ENCODE measurements at regions of chr22 and their contacts with region 1.

Region 1: DNA sequence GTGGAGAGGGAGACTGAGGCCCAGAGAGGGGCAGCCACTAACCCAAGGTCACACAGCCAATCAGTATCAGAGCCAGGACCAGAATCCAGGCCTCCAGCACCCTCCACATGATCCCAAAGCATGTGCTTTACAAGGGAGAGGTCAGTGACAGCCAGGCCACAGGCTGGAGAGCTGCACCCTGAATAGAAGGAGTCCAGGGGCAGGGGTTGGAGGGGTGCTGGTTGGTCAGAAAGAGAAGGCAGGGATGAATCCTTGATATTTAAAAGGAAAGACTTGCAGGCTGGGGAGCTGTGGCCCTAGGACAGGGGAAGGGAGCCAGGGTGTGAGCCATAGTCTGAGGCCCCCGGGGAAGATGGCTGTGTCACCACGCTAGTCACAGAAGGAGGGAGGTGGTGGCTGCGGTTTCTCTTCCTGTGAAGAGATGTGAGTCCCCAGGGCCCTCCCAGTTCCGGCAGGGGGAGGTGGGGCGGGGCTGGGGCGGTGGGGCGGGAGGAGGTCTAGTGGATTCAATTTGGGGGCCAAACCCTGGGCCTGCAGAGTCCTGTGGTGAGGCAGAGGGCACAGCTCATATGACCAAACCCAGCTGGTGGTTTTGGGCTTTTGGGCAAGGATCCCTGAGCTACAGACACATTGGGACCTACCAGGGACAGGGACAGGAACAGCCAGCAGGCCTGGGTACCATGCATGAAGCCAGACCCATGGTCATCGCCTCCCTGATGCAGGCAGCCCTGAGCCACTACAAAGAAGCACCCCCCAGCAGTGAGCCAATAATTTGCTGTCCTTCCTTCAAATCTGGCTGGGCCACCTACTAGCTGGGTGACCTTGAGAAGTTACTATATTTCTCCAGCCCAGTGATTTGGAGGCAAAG is 14.0 kb downstream of the RAC2 start:
- DNase-seq: peak; percentile 87 to 96 (median 90)
- H3K4me3 ChIP-seq: peak overlapping the region; percentile 85
- H3K4me3 Mint-ChIP-seq: peak overlapping the region; percentile 76 to 89 (median 85)
- H3K27ac ChIP-seq: peak overlapping the region; percentile 93
- H3K27ac Mint-ChIP-seq: peak overlapping the region; percentile 98 to 100 (median 99)
- H3K4me1 ChIP-seq: peaks cover 94% of the 10 kb centered on the region
- H3K4me1 Mint-ChIP-seq: peaks cover 86 to 92% (median 92%) of the 10 kb centered on the region in 3 donors
- H3K27me3 ChIP-seq: no peaks in the 10 kb centered on the region
- H3K27me3 Mint-ChIP-seq: no peaks in the 10 kb centered on the region

Region 2: GRCh38 chr22:37218771-37219411 is 11.1 kb before region 1 on chr22:
- CTCF ChIA-PET with region 1: interaction called, 12 read pairs
- POLR2A ChIA-PET with region 1: interaction called, 14 read pairs
- DNase-seq: peak; percentile 36 to 94 (median 86)
- H3K4me3 ChIP-seq: peak overlapping the region; percentile 53
- H3K4me3 Mint-ChIP-seq: peak overlapping the region; percentile 6 to 68 (median 61)
- H3K27ac ChIP-seq: no peak overlapping the region
- H3K27ac Mint-ChIP-seq: peak overlapping the region; percentile 46 to 99 (median 94)
- H3K4me1 ChIP-seq: peaks cover 76% of the 10 kb centered on the region
- H3K4me1 Mint-ChIP-seq: peaks cover 63 to 83% (median 76%) of the 10 kb centered on the region in 3 donors
- H3K27me3 ChIP-seq: no peaks in the 10 kb centered on the region
- H3K27me3 Mint-ChIP-seq: no peaks in the 10 kb centered on the region

Region 3: DNA sequence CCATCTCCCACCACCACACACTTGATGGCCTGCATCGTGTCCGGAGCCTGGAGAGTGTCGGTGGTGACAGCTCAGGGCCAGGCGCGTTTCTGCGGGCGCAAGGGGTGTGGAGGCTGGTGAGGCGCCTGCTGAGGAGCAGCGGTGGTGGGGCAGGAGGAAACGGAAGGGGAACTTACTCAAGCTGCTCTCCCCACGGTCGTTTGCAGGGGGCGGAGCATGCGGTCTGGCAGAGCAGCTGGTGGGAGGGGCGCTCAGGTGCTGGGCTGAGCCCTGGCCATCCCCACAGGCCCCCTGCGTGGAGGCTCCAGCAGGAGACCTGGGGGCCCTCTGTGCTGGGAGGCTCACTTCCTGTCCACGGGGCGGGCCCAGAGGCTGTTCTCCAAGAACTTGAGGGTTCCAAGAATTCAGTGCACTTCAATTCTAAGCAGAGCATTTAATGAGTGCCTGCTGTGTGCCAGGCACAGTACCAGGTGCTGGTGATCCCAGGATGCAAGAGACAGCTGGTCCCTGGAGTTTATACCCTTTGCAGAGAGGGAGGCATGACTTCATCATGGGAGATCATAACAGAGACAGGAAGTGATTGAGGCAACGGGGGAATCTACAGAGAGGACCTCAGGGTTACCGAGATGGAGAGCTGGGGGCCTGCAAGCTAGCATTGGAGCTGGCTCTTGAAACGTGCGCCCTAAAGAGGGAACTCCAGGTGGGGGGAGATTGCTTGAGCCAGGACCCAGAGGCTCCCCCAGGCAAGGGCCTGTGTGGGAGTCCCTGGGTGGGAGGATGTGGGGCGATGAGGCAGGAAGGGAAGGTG is 14.3 kb after region 1 on chr22 and contains the start of gene RAC2:
- CTCF ChIA-PET with region 1: interaction called, 105 read pairs
- POLR2A ChIA-PET with region 1: interaction called, 115 read pairs
- DNase-seq: peak; percentile 77 to 93 (median 83)
- H3K4me3 ChIP-seq: peak within 1 kb of the TSS; percentile 100
- H3K4me3 Mint-ChIP-seq: peak within 1 kb of the TSS; percentile 88 to 98 (median 93)
- H3K27ac ChIP-seq: peak within 1 kb of the TSS; percentile 91
- H3K27ac Mint-ChIP-seq: peak within 1 kb of the TSS; percentile 79 to 100 (median 98)
- H3K4me1 ChIP-seq: peaks cover 48% of the 10 kb centered on the region
- H3K4me1 Mint-ChIP-seq: peaks cover 49 to 58% (median 50%) of the 10 kb centered on the region in 3 donors
- H3K27me3 ChIP-seq: no peaks in the 10 kb centered on the region
- H3K27me3 Mint-ChIP-seq: no peaks in the 10 kb centered on the region
- total RNA-seq, gene RAC2: 433 to 452 TPM

Region 4: DNA sequence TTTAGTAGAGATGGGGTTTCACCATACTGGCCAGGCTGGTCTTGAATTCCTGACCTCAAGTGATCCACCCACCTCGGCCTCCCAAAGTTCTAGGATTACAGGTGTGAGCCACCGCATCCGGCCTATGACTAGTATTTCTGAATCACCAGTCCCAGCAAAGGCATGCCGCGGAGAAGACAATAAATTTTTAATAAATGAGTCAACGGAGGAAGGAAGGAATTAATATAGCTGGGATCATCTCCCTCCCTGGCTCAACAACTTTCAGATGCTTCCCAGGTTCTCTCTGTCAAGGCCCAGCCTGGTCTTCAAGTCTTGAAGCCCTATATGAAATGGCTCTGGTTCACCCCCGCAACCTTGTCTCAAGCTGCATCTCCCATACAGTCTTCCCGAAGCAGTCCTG is 98.0 kb after region 1 on chr22:
- CTCF ChIA-PET with region 1: no interaction called
- POLR2A ChIA-PET with region 1: interaction called, 10 read pairs
- DNase-seq: no peak
- H3K4me3 ChIP-seq: no peak overlapping the region
- H3K4me3 Mint-ChIP-seq: no peak overlapping the region
- H3K27ac ChIP-seq: no peak overlapping the region
- H3K27ac Mint-ChIP-seq: no peak overlapping the region
- H3K4me1 ChIP-seq: no peaks in the 10 kb centered on the region
- H3K4me1 Mint-ChIP-seq: peaks cover 0 to 2% (median 0%) of the 10 kb centered on the region in 3 donors
- H3K27me3 ChIP-seq: peaks cover 37% of the 10 kb centered on the region
- H3K27me3 Mint-ChIP-seq: peaks cover 34 to 63% of the 10 kb centered on the region in 2 donors

Region 5: GRCh38 chr22:37472418-37473006 is 242.5 kb after region 1 on chr22:
- CTCF ChIA-PET with region 1: no interaction called
- POLR2A ChIA-PET with region 1: no interaction called
- DNase-seq: peak; percentile 30 to 66 (median 37)
- H3K4me3 ChIP-seq: no peak overlapping the region
- H3K4me3 Mint-ChIP-seq: no peak overlapping the region
- H3K27ac ChIP-seq: no peak overlapping the region
- H3K27ac Mint-ChIP-seq: peak overlapping the region in 6 of 8 donors; percentile 17 to 87 (median 54)
- H3K4me1 ChIP-seq: no peaks in the 10 kb centered on the region
- H3K4me1 Mint-ChIP-seq: peaks cover 8 to 16% (median 10%) of the 10 kb centered on the region in 3 donors
- H3K27me3 ChIP-seq: no peaks in the 10 kb centered on the region
- H3K27me3 Mint-ChIP-seq: no peaks in the 10 kb centered on the region